Right ventricle myocardium inferior (tissue), 1 donor: ENCODE measurements at regions of chr17 and their contacts with region 1.

Region 1: DNA sequence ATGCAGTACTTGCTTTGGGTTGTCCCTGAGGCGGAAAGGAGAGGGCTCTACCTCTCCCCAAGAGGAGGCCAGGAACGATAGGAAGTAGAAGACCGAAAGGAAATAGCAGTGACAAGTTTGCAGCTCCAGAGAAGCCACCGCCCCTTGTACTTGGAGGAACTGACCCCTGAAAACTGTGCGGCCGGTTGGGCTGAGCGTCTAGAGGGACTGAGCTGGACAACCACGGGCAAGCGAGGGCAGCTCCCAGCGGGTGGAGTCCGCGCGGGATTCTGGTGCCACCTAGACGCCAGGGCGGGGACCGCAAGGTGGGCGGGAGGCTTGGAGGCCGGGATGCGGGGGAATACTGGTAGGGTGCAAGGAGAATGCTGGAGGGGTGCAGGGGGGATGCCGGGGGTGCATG is 1.3 kb upstream of the SLC6A4 start:
- DNase-seq: no peak
- ATAC-seq: peak; percentile 73

Region 2: DNA sequence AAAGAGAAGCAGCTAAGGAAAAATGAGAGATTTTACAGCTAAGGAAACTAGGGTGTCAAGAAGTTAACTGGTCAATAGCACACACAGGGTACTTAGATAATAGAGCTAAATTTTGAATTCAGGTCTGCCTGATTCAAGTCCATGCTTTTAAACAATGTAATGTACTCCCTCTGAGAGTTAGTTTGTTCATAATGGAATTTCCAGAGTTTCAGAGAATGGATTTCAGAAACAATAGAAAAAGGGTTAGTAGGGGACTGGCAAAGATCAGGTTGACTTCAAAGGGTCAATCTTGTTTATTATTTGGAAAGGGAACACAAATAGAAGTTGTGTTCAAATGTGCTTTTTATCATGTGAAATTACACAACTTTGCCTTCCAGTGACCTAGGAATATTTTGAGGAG is 102.2 kb before region 1 on chr17:
- intact Hi-C with region 1: loop called (anchors 5 kb)
- DNase-seq: no peak
- ATAC-seq: no peak